Prostate gland (tissue), 2 donors: ENCODE measurements at regions of chr12 and their contacts with region 1.

Region 1: GRCh38 chr12:7933255-7933729 is 2.7 kb downstream of the SLC2A3 start:
- DNase-seq: peak; percentile 33
- H3K4me3 ChIP-seq: no peak overlapping the region
- H3K27ac ChIP-seq: peak overlapping the region; percentile 29 to 45
- H3K4me1 ChIP-seq: no peaks in the 10 kb centered on the region
- H3K27me3 ChIP-seq: no peaks in the 10 kb centered on the region
- CTCF ChIP-seq: peak; percentile 14 to 64 (median 56)
- POLR2A ChIP-seq: peak; percentile 15

Region 2: GRCh38 chr12:7859552-7859951 is 73.7 kb before region 1 on chr12:
- intact Hi-C with region 1: loop called (anchors 5 kb)
- DNase-seq: no peak
- H3K4me3 ChIP-seq: no peak overlapping the region
- H3K27ac ChIP-seq: no peak overlapping the region
- H3K4me1 ChIP-seq: no peaks in the 10 kb centered on the region
- H3K27me3 ChIP-seq: no peaks in the 10 kb centered on the region
- CTCF ChIP-seq: no peak
- POLR2A ChIP-seq: no peak

Region 3: GRCh38 chr12:7959701-7960121 is 26.4 kb after region 1 on chr12:
- intact Hi-C with region 1: loop called (anchors 2 kb)
- DNase-seq: no peak
- H3K4me3 ChIP-seq: no peak overlapping the region
- H3K27ac ChIP-seq: no peak overlapping the region
- H3K4me1 ChIP-seq: no peaks in the 10 kb centered on the region
- H3K27me3 ChIP-seq: no peaks in the 10 kb centered on the region
- CTCF ChIP-seq: no peak
- POLR2A ChIP-seq: no peak

Region 4: DNA sequence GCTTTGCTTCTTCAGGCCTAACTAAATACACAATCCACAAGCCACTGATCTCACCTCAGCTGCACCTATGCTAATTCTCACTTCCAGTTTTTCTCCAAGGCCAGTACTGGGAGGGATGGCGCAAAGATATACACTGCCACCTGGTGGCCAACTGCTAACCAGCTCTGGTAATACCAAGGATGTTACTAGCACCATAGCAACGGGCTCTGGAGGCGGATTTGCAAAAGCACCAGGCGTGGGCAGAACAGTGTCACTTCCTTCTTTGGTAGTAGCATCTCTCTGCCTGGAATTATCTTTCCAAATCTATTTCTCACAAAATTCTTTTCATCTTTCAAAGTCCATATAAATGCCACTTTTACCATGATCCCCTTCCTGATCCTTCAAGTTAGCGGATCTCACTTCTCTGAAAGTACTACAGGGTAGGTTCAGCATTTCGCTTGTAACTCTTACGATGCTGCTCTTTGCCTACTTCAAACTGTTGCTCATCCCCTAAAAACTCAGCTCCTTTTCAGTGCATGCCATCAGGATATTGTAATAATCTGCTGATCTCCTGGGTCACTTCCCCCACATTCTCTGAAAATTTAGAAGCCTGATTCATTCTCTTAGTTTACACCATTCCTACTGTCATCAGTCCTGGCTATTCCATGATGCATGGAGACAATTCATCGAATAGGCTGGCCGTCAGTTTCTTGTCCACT is 62.1 kb after region 1 on chr12:
- intact Hi-C with region 1: loop called (anchors 2 kb)
- DNase-seq: peak; percentile 68
- H3K4me3 ChIP-seq: no peak overlapping the region
- H3K27ac ChIP-seq: no peak overlapping the region
- H3K4me1 ChIP-seq: no peaks in the 10 kb centered on the region
- H3K27me3 ChIP-seq: no peaks in the 10 kb centered on the region
- CTCF ChIP-seq: peak; percentile 80 to 91 (median 86)
- POLR2A ChIP-seq: no peak

Region 5: DNA sequence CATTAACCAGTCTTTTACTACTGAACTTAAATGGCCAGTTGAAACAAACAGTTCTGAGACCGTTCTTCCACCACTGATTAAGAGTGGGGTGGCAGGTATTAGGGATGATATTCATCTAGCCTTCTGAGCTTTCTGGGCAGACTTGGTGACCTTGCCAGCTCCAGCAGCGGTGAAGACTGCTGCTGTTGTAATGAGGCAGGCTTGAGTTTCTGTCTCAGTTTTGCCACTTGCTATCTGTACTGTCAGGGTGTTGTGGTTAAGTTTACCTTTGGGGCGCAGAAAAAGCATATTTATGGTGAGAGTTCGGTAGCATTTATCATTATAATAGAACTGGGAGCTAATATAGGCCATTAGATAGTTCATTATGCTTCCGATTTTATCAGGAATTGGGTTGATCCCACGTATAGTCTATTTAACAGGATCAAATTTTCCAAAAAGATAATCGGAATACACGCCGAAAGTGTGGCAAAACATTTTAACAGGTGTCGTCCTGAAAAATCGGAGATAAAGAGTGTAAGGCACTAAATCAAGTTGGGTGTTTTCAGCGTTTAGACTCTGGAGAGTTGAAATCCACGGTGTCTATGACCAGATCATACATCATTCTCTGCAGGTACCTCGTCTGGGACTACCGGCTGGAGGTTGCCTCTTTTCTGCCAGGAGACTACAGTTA is 148.1 kb after region 1 on chr12:
- intact Hi-C with region 1: no loop called
- DNase-seq: no peak
- H3K4me3 ChIP-seq: peak overlapping the region; percentile 69 to 89
- H3K27ac ChIP-seq: peak overlapping the region; percentile 95 to 96
- H3K4me1 ChIP-seq: peaks cover 6% of the 10 kb centered on the region
- H3K27me3 ChIP-seq: no peaks in the 10 kb centered on the region
- CTCF ChIP-seq: no peak
- POLR2A ChIP-seq: no peak